Activated naive CD4-positive, alpha-beta T cell treated with anti-CD3 and anti-CD28 coated beads for 36 hours (primary cell): ENCODE measurements at regions of chr19 and their contacts with region 1.

Region 1: GRCh38 chr19:3062168-3063102 is at the start of gene TLE5:
- DNase-seq: peak; percentile 65
- H3K4me3 Mint-ChIP-seq: peak within 1 kb of the TSS; percentile 84
- H3K27ac Mint-ChIP-seq: peak within 1 kb of the TSS; percentile 91
- H3K4me1 Mint-ChIP-seq: peaks cover 33% of the 10 kb centered on the region
- H3K27me3 Mint-ChIP-seq: no peaks in the 10 kb centered on the region
- total RNA-seq, gene TLE5: 326 to 354 TPM

Region 2: GRCh38 chr19:3035542-3036118 is 26.8 kb before region 1 on chr19:
- CTCF ChIA-PET with region 1: interaction called, 6 read pairs
- intact Hi-C with region 1: loop called (anchors 1 kb)
- DNase-seq: peak; percentile 98
- H3K4me3 Mint-ChIP-seq: peak overlapping the region; percentile 87
- H3K27ac Mint-ChIP-seq: peak overlapping the region; percentile 94
- H3K4me1 Mint-ChIP-seq: peaks cover 19% of the 10 kb centered on the region
- H3K27me3 Mint-ChIP-seq: no peaks in the 10 kb centered on the region

Region 3: DNA sequence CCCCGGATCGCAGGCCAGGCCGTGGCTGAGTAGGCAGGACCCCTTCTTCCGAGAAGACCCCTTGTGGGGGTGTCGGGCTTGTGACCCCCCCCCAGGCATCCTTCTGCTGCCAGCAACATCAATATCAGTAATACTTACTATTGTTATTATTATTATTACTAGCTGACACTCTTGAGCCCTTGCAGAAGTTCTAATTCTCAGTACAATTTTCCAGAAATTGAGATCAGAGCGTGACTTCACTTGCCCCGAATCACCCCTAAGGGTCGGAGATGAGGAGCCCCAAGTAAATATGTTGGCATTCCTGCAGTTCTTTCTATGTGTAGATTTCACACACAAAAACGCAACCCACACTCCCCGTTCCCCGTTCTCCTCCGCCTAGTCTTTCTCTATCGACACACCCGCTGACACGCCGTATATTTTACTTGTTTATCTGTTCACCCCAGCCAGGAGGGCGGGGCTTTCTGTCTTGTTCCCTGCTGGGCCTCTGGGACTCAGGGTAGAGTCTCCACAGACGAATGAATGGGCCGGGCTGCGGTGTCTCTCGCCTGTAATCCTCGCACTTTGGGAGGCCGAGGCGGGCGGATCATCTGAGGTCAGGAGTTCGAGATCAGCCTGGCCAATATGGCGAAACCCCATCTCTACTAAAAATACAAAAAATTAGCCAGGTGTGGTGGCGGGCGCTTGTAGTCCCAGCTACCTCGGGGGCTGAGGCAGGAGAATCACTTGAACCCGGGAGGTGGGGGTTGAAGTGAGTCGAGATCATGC is 14.8 kb before region 1 on chr19:
- CTCF ChIA-PET with region 1: interaction called, 10 read pairs
- intact Hi-C with region 1: no loop called
- DNase-seq: peak; percentile 86
- H3K4me3 Mint-ChIP-seq: peak overlapping the region; percentile 75
- H3K27ac Mint-ChIP-seq: peak overlapping the region; percentile 54
- H3K4me1 Mint-ChIP-seq: peaks cover 13% of the 10 kb centered on the region
- H3K27me3 Mint-ChIP-seq: no peaks in the 10 kb centered on the region

Region 4: DNA sequence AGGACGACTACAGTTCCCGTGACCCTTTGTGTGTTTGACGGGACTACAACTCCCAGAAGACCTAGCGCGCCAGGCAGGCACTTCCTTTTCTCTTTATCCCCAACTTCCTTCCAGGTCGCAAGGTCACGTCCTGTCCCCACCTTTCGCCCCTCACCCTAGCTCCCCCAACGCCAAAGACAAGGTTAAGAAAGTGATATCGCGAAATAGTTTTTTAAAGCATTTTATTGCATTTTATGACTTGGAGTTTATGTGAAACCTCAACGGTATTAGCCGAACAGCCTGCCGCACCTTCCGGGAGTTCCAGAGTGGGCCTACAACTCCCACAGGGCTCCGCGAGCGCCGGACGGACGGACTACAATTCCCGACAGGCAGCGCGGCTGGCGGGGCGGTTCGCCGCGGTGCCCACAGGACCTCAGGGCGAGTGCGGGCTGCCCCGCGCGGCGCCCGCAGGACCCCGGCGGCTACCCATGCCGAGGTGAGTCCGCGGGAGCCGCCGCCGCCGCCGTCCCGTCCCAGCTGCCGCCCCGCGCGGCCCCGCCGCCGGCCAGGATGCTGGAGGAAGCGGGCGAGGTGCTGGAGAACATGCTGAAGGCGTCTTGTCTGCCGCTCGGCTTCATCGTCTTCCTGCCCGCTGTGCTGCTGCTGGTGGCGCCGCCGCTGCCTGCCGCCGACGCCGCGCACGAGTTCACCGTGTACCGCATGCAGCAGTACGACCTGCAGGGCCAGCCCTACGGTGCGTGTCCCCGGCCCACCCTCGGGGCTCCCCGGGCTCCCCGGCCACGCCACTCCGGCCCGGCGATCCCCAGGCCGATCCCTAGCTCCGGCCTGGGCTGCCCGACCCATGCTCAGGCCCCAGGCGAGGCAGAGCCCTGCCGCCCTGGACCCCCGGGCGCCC is 123.3 kb after region 1 on chr19 and contains the start of gene NCLN:
- CTCF ChIA-PET with region 1: no interaction called
- intact Hi-C with region 1: loop called (anchors 2 kb)
- DNase-seq: peak; percentile 95
- H3K4me3 Mint-ChIP-seq: peak within 1 kb of the TSS; percentile 98
- H3K27ac Mint-ChIP-seq: peak within 1 kb of the TSS; percentile 99
- H3K4me1 Mint-ChIP-seq: peaks cover 58% of the 10 kb centered on the region
- H3K27me3 Mint-ChIP-seq: no peaks in the 10 kb centered on the region
- total RNA-seq, gene NCLN: 38.4 to 42.9 TPM